ENCODE measurements at regions of chr2 and their contacts with region 1.

Region 1: DNA sequence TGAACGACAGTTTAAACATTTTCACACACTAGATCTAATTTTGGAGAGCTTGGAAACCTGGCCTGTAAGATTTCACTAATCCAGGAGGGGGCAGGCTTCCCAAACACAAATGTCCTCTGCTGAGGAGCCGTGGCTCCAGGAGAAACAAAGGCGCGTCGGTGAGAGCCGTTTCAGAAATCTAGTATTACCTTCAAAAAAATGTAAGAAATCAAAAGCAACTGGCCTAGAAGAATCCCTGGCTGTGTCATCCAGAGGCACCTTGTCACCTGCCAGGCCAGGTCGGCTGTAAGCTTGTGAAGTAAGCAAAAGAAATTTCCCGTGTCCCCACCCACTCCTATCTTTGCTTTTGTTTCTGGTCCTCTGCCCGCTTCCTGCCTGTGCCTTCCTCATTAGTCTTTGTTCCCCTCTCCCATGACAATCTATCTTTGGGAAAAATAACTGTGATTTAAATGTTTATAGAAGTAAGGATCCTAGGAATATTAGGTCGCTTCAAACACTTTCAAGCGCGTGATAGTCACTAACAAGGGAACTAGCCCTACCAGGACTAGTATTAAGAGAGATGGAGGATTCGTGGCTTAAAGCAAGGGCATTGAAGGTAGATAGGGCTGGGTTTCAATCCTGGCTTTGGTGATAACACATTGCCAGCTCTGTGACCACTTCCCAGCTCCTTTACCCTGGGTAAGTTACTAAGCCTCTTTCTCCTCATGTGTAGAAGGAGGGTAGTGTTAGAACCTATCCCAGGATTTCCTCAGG is 99.5 kb upstream of the STK39 start:
- DNase-seq: peak; percentile 36 to 76 (median 64)
- ATAC-seq: peak; percentile 89
- H3K4me3 ChIP-seq: peak overlapping the region; percentile 43
- H3K4me3 Mint-ChIP-seq: peak overlapping the region; percentile 80 to 96 (median 88)
- H3K27ac ChIP-seq: no peak overlapping the region
- H3K27ac Mint-ChIP-seq: peak overlapping the region in 7 of 9 donors; percentile 11 to 89 (median 71)
- H3K4me1 ChIP-seq: no peaks in the 10 kb centered on the region
- H3K4me1 Mint-ChIP-seq: peaks cover 2 to 9% (median 8%) of the 10 kb centered on the region in 7 donors
- H3K27me3 ChIP-seq: no peaks in the 10 kb centered on the region
- H3K27me3 Mint-ChIP-seq: peaks cover 0 to 36% (median 0%) of the 10 kb centered on the region in 5 donors

Region 2: DNA sequence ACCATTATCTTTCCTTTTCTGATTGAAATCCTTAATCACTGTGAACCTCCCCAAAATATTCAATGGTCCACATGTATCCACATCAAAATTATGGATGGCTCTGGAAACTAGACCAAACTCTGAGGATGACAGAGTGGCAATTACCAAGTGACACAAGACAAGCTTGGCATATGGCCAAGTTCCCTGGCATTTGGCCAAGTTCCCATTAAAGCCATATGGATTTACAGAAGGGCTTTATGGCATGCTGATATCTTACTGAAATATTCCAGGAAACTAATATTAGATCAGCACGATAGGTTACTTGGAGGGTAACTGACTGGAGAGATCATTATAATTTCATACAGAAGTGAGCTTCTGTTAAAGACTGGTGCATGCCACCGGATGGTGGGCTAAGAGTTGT is 87.2 kb after region 1 on chr2:
- CTCF ChIA-PET with region 1: interaction called, 3 read pairs
- POLR2A ChIA-PET with region 1: no interaction called
- intact Hi-C with region 1: loop called (anchors 2 kb)
- DNase-seq: no peak
- ATAC-seq: no peak
- H3K4me3 ChIP-seq: no peak overlapping the region
- H3K4me3 Mint-ChIP-seq: peak overlapping the region in 4 of 10 donors; percentile 34 to 78 (median 70)
- H3K27ac ChIP-seq: no peak overlapping the region
- H3K27ac Mint-ChIP-seq: peak overlapping the region in 5 of 9 donors; percentile 6 to 94 (median 48)
- H3K4me1 ChIP-seq: peaks cover 6 to 59% of the 10 kb centered on the region in 2 donors
- H3K4me1 Mint-ChIP-seq: peaks cover 31 to 94% (median 70%) of the 10 kb centered on the region in 7 donors
- H3K27me3 ChIP-seq: no peaks in the 10 kb centered on the region
- H3K27me3 Mint-ChIP-seq: no peaks in the 10 kb centered on the region

Region 3: GRCh38 chr2:168490015-168490874 is 143.3 kb after region 1 on chr2:
- CTCF ChIA-PET with region 1: interaction called, 3 read pairs
- POLR2A ChIA-PET with region 1: no interaction called
- intact Hi-C with region 1: loop called in 1 of 2 experiments (anchors 2 kb)
- DNase-seq: peak in 8 of 9 donors; percentile 38 to 62 (median 44)
- ATAC-seq: peak; percentile 85
- H3K4me3 ChIP-seq: peak overlapping the region; percentile 42
- H3K4me3 Mint-ChIP-seq: peak overlapping the region; percentile 65 to 90 (median 74)
- H3K27ac ChIP-seq: peak overlapping the region; percentile 55
- H3K27ac Mint-ChIP-seq: peak overlapping the region; percentile 77 to 91 (median 88)
- H3K4me1 ChIP-seq: peaks cover 11 to 23% of the 10 kb centered on the region in 2 donors
- H3K4me1 Mint-ChIP-seq: peaks cover 24 to 87% (median 65%) of the 10 kb centered on the region in 7 donors
- H3K27me3 ChIP-seq: no peaks in the 10 kb centered on the region
- H3K27me3 Mint-ChIP-seq: peaks cover 0 to 3% (median 0%) of the 10 kb centered on the region in 5 donors

Region 4: DNA sequence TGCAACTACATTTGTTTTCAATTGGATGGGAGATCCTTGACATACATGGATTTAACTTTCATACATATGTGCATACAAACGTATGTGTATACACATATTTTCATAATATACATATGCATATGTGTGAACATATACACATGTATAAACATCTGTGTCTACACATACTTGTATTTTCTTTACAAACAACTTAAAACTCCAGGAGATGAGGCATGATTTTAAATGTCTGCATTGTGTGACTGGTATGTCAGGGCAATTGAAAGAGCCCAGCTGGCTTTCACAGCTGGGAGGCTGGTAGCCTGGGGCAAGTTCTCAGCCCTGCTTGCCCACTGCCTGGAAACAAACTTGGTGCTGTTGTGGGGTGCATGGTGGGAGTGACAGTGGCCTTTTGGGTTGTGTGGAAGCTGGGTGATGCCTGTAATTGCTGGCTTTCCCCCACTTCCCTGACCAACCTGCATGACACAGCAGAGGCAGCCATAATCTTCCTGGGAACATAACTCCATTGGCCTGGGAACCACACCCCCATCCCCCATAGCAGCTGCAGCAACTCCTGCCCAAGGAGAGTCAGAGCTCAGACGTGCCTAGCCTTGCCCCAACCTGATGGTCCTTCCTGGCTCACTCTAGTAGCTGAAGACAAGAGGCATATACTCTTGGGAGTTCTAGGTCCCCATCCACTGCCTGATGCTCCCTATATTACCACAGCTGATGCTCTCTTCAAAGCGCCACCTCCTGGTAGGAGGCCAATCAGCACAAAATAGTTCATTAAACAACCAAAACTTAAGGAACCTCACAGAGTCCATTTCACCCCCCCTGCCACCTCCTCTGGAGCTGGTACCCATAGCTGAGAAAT is 267.5 kb after region 1 on chr2:
- CTCF ChIA-PET with region 1: interaction called, 4 read pairs
- POLR2A ChIA-PET with region 1: no interaction called
- intact Hi-C with region 1: loop called (anchors 1 to 2 kb)
- DNase-seq: no peak
- ATAC-seq: no peak
- H3K4me3 ChIP-seq: no peak overlapping the region
- H3K4me3 Mint-ChIP-seq: no peak overlapping the region
- H3K27ac ChIP-seq: no peak overlapping the region
- H3K27ac Mint-ChIP-seq: peak overlapping the region in 1 of 9 donors; percentile 72
- H3K4me1 ChIP-seq: peaks cover 0 to 14% of the 10 kb centered on the region in 2 donors
- H3K4me1 Mint-ChIP-seq: peaks cover 17 to 74% (median 57%) of the 10 kb centered on the region in 7 donors
- H3K27me3 ChIP-seq: no peaks in the 10 kb centered on the region
- H3K27me3 Mint-ChIP-seq: no peaks in the 10 kb centered on the region

Region 5: GRCh38 chr2:168660870-168661862 is 314.3 kb after region 1 on chr2:
- CTCF ChIA-PET with region 1: no interaction called
- POLR2A ChIA-PET with region 1: no interaction called
- intact Hi-C with region 1: no loop called
- DNase-seq: no peak
- ATAC-seq: no peak
- H3K4me3 ChIP-seq: no peak overlapping the region
- H3K4me3 Mint-ChIP-seq: no peak overlapping the region
- H3K27ac ChIP-seq: no peak overlapping the region
- H3K27ac Mint-ChIP-seq: peak overlapping the region in 1 of 9 donors; percentile 14
- H3K4me1 ChIP-seq: peaks cover 0 to 2% of the 10 kb centered on the region in 2 donors
- H3K4me1 Mint-ChIP-seq: peaks cover 4 to 41% (median 26%) of the 10 kb centered on the region in 7 donors
- H3K27me3 ChIP-seq: no peaks in the 10 kb centered on the region
- H3K27me3 Mint-ChIP-seq: no peaks in the 10 kb centered on the region

Region 6: DNA sequence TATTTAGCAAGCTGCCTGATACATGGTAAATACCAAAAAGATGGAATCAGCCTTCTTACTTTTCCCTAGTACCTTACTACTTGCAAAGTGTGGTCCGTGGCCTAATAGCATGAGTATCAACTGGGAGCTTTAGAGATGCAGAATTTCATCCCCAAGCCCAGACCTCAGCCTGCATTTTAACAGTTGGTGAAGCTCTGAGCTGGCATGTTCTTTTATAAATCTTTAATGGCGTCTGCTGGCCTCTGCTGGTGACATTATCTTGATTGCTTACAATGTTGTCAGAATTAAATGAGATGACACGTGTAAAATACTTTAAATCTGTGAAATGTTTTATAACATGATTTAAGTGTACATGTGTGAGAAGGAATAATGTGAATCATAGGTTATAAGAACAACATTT is 340.4 kb after region 1 on chr2:
- CTCF ChIA-PET with region 1: interaction called, 34 read pairs
- POLR2A ChIA-PET with region 1: no interaction called
- intact Hi-C with region 1: loop called (anchors 1 kb)
- DNase-seq: peak in 7 of 9 donors; percentile 12 to 50 (median 31)
- ATAC-seq: no peak
- H3K4me3 ChIP-seq: no peak overlapping the region
- H3K4me3 Mint-ChIP-seq: no peak overlapping the region
- H3K27ac ChIP-seq: no peak overlapping the region
- H3K27ac Mint-ChIP-seq: no peak overlapping the region
- H3K4me1 ChIP-seq: no peaks in the 10 kb centered on the region
- H3K4me1 Mint-ChIP-seq: peaks cover 3 to 28% (median 9%) of the 10 kb centered on the region in 7 donors
- H3K27me3 ChIP-seq: no peaks in the 10 kb centered on the region
- H3K27me3 Mint-ChIP-seq: no peaks in the 10 kb centered on the region

Region 7: DNA sequence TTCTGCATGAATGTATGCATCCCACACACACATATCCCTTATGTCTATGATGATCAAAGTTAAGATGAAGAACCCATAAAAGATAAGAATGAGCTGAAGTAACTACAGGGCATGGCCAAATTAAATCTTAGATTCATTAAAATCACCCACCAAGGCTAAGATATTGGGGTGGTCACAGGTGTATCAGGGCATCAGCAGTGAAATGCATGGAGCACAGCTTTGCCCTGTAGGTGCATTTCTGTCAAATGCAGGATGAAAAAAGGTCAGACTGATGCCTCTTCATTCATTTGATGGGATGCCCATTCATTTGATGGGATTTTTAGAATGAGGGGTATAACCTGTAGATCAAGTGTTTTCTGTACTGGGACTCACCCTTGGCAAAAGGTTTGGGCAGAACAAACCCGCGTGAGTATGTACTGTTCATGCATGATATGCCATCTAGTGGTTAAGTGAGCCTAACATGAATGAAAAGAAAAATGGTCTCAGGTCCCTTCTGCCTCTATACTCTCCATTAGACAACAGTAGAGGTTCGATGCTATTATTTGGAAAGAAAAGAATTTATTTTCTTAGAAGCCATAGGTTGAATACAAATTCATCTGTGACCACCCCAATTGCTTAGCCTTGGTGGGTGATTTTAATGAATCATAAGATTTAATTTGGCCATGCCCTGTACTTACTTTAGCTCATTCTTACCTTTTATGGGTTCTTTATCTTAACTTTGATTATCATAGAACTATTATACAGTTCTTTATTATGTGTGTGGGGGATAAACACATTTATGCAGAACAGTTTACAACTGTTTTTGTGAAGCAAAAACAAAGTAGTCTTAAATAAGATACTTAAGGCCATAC is 412.3 kb after region 1 on chr2:
- CTCF ChIA-PET with region 1: interaction called, 27 read pairs
- POLR2A ChIA-PET with region 1: interaction called, 3 read pairs
- intact Hi-C with region 1: loop called (anchors 1 kb)
- DNase-seq: peak in 7 of 9 donors; percentile 12 to 53 (median 45)
- ATAC-seq: peak; percentile 87
- H3K4me3 ChIP-seq: no peak overlapping the region
- H3K4me3 Mint-ChIP-seq: no peak overlapping the region
- H3K27ac ChIP-seq: no peak overlapping the region
- H3K27ac Mint-ChIP-seq: peak overlapping the region in 1 of 9 donors; percentile 14
- H3K4me1 ChIP-seq: peaks cover 21 to 42% of the 10 kb centered on the region in 2 donors
- H3K4me1 Mint-ChIP-seq: peaks cover 21 to 52% (median 48%) of the 10 kb centered on the region in 7 donors
- H3K27me3 ChIP-seq: no peaks in the 10 kb centered on the region
- H3K27me3 Mint-ChIP-seq: no peaks in the 10 kb centered on the region

Region 8: GRCh38 chr2:168920504-168921157 is 573.7 kb after region 1 on chr2:
- CTCF ChIA-PET with region 1: interaction called, 16 read pairs
- POLR2A ChIA-PET with region 1: no interaction called
- intact Hi-C with region 1: loop called (anchors 1 kb)
- DNase-seq: peak in 6 of 9 donors; percentile 15 to 51 (median 42)
- ATAC-seq: no peak
- H3K4me3 ChIP-seq: no peak overlapping the region
- H3K4me3 Mint-ChIP-seq: no peak overlapping the region
- H3K27ac ChIP-seq: no peak overlapping the region
- H3K27ac Mint-ChIP-seq: peak overlapping the region in 1 of 9 donors; percentile 8
- H3K4me1 ChIP-seq: no peaks in the 10 kb centered on the region
- H3K4me1 Mint-ChIP-seq: peaks cover 0 to 8% (median 0%) of the 10 kb centered on the region in 7 donors
- H3K27me3 ChIP-seq: no peaks in the 10 kb centered on the region
- H3K27me3 Mint-ChIP-seq: peaks cover 18 to 58% (median 25%) of the 10 kb centered on the region in 5 donors

Region 9: GRCh38 chr2:168992026-168992425 is 645.1 kb after region 1 on chr2:
- CTCF ChIA-PET with region 1: no interaction called
- POLR2A ChIA-PET with region 1: no interaction called
- intact Hi-C with region 1: no loop called
- DNase-seq: no peak
- ATAC-seq: no peak
- H3K4me3 ChIP-seq: no peak overlapping the region
- H3K4me3 Mint-ChIP-seq: no peak overlapping the region
- H3K27ac ChIP-seq: no peak overlapping the region
- H3K27ac Mint-ChIP-seq: no peak overlapping the region
- H3K4me1 ChIP-seq: no peaks in the 10 kb centered on the region
- H3K4me1 Mint-ChIP-seq: no peaks in the 10 kb centered on the region
- H3K27me3 ChIP-seq: no peaks in the 10 kb centered on the region
- H3K27me3 Mint-ChIP-seq: peaks cover 0 to 14% (median 0%) of the 10 kb centered on the region in 5 donors